CD8-positive, alpha-beta memory T cell (primary cell): ENCODE measurements at regions of chr5 and their contacts with region 1.

Region 1: GRCh38 chr5:39217365-39218281 is 1.7 kb downstream of the FYB1 start:
- DNase-seq: peak; percentile 57 to 86 (median 79)
- H3K4me3 ChIP-seq: peak overlapping the region; percentile 62
- H3K4me3 Mint-ChIP-seq: peak overlapping the region; percentile 75 to 89 (median 81)
- H3K27ac ChIP-seq: peak overlapping the region; percentile 58
- H3K27ac Mint-ChIP-seq: peak overlapping the region; percentile 82 to 99 (median 94)
- H3K4me1 ChIP-seq: peaks cover 71% of the 10 kb centered on the region
- H3K4me1 Mint-ChIP-seq: peaks cover 76 to 81% (median 77%) of the 10 kb centered on the region in 3 donors
- H3K27me3 ChIP-seq: no peaks in the 10 kb centered on the region
- H3K27me3 Mint-ChIP-seq: no peaks in the 10 kb centered on the region

Region 2: DNA sequence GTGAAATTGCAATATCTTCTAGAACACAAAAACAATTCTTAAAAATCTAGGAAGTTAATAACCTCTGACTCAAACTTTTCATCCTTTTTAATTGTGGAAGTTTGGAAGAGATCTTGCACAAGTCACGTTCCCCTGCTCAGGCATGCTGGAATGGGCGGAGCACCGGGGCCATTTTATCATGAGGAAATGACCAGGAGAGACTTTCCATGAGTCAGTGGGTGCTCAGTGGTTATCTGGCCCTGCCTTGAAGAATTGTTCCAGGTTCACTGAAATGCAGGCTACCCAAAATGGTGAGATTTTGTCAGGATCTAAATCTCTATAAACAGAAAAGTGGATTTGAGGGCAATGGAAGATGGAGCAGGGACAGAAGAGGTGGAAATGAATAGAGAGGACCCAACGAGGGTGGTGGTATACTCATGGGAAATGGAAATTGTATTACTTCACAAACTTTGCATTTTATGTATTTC is 59.5 kb before region 1 on chr5:
- CTCF ChIA-PET with region 1: interaction called, 37 read pairs
- POLR2A ChIA-PET with region 1: no interaction called
- DNase-seq: peak in 1 of 5 donors; percentile 25
- H3K4me3 ChIP-seq: no peak overlapping the region
- H3K4me3 Mint-ChIP-seq: peak overlapping the region in 6 of 7 donors; percentile 1 to 59 (median 38)
- H3K27ac ChIP-seq: peak overlapping the region; percentile 13
- H3K27ac Mint-ChIP-seq: peak overlapping the region; percentile 44 to 86 (median 75)
- H3K4me1 ChIP-seq: peaks cover 90% of the 10 kb centered on the region
- H3K4me1 Mint-ChIP-seq: peaks cover 80 to 95% (median 93%) of the 10 kb centered on the region in 3 donors
- H3K27me3 ChIP-seq: no peaks in the 10 kb centered on the region
- H3K27me3 Mint-ChIP-seq: no peaks in the 10 kb centered on the region

Region 3: DNA sequence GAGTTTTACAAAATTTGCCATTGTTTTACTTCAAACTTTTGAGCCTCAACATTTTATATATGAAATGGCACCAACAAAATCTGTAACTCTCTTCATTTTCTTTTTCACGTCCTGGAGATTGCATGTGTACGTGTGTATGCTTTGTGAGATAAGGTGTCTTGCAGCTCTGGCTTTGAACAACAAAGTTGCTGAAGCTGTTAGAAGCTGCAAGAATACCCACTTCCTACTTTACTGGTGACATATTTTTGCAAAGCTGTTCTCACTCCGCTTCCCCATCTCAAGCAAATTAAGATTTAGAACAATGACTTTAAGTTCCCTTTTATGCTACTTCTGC is 40.0 kb before region 1 on chr5:
- CTCF ChIA-PET with region 1: interaction called, 79 read pairs
- POLR2A ChIA-PET with region 1: interaction called, 19 read pairs
- DNase-seq: peak in 3 of 5 donors; percentile 57 to 78 (median 70)
- H3K4me3 ChIP-seq: peak overlapping the region; percentile 61
- H3K4me3 Mint-ChIP-seq: peak overlapping the region; percentile 60 to 84 (median 74)
- H3K27ac ChIP-seq: peak overlapping the region; percentile 68
- H3K27ac Mint-ChIP-seq: peak overlapping the region; percentile 77 to 97 (median 93)
- H3K4me1 ChIP-seq: peaks cover 96% of the 10 kb centered on the region
- H3K4me1 Mint-ChIP-seq: peaks cover 96 to 100% (median 99%) of the 10 kb centered on the region in 3 donors
- H3K27me3 ChIP-seq: no peaks in the 10 kb centered on the region
- H3K27me3 Mint-ChIP-seq: no peaks in the 10 kb centered on the region

Region 4: DNA sequence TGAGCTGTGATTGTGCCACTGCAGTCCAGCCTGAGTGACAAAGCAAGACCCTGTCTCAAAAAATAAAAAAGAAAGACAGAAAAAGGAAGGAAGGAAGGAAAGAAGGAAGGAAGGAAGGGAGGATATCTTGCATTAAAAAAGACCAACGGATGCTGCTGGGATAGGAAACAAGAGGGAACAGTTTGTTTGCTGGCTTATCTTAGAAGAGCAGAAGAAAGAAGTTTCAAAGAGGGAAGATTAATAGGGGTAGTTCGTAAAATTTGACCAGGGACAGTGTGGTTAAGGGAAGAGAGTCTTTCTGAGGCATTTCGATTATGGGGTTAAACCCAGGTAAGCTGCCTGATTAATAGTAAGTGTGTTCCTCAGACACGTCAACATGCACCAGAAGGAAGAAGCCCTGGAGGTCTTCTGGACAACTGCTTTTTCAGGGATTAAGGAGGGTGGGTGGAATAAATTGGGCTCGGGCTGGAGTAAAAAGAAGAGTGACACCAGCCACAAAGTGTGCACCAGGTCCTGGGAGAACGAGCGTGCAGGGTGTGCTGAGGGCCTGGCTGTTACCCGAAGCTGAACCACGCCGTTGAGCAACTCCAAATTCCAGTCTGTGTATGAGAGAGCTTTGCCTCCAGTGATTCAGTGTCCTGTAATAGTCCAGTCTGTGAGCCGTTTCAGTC is 23.0 kb before region 1 on chr5:
- CTCF ChIA-PET with region 1: interaction called, 156 read pairs
- POLR2A ChIA-PET with region 1: interaction called, 24 read pairs
- DNase-seq: no peak
- H3K4me3 ChIP-seq: peak overlapping the region; percentile 45
- H3K4me3 Mint-ChIP-seq: peak overlapping the region; percentile 42 to 96 (median 79)
- H3K27ac ChIP-seq: peak overlapping the region; percentile 40
- H3K27ac Mint-ChIP-seq: peak overlapping the region; percentile 67 to 97 (median 90)
- H3K4me1 ChIP-seq: peaks cover 67% of the 10 kb centered on the region
- H3K4me1 Mint-ChIP-seq: peaks cover 75 to 81% (median 78%) of the 10 kb centered on the region in 3 donors
- H3K27me3 ChIP-seq: no peaks in the 10 kb centered on the region
- H3K27me3 Mint-ChIP-seq: no peaks in the 10 kb centered on the region

Region 5: DNA sequence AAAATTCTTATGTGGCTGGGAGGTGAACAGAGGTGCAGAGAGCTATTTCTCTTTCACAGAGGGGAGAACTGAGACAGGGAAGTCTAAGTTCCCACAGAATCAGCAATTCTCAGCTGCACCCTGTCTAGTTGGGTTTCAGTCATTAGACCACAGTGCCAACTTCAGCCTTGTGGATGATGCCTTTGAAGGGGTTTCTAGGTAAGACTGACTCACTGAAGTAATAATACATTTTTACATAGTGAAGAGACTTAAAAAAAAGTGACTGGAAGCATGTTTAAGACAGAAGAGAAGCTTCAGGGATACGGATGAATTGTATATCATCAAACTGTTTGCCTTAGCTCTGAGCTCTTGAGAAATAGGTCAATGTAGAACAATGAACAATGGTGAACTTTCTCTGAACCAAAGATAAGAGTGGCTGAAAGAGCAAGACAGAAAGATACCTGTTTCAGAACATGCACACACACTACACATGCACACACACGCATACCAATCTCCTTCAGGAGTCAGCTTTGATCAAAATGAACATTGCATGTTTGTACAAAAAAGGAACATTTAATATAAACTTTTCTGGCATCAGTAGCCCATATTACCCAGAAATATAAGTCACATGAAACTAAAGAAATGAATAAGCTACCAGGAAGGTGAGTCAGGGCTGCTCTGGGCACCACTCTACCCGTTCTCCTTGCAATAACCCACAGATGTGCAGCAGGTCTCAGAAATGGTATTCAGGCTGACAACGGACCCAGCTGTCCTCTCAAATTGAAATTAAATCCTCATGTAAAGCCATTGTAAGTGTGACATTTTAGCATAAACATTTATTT is 14.3 kb after region 1 on chr5:
- CTCF ChIA-PET with region 1: interaction called, 17 read pairs
- POLR2A ChIA-PET with region 1: no interaction called
- DNase-seq: no peak
- H3K4me3 ChIP-seq: no peak overlapping the region
- H3K4me3 Mint-ChIP-seq: peak overlapping the region in 4 of 7 donors; percentile 2 to 44 (median 22)
- H3K27ac ChIP-seq: no peak overlapping the region
- H3K27ac Mint-ChIP-seq: peak overlapping the region in 7 of 8 donors; percentile 6 to 78 (median 40)
- H3K4me1 ChIP-seq: peaks cover 9% of the 10 kb centered on the region
- H3K4me1 Mint-ChIP-seq: peaks cover 14 to 27% (median 15%) of the 10 kb centered on the region in 3 donors
- H3K27me3 ChIP-seq: no peaks in the 10 kb centered on the region
- H3K27me3 Mint-ChIP-seq: no peaks in the 10 kb centered on the region

Region 6: DNA sequence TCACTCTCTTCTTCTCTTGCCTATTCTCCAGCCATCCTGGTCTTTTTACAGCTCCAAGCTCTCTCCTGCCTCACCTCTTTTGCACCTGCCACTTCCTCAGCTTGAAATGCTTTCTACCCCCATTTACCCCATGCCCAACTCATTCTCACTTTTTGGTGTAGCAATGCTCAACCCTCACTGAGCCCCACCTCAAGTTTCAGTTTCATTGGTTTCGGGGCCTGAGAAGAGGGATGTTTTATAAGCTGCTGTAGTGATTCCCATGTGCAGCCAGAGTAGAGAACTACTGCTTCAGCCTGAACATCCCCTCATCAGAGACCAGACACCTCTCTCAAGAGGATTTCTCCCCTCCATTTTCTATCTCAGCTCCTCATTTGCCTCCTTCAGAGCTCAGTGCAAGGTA is 46.9 kb after region 1 on chr5:
- CTCF ChIA-PET with region 1: interaction called, 23 read pairs
- POLR2A ChIA-PET with region 1: no interaction called
- DNase-seq: no peak
- H3K4me3 ChIP-seq: no peak overlapping the region
- H3K4me3 Mint-ChIP-seq: peak overlapping the region; percentile 24 to 92 (median 64)
- H3K27ac ChIP-seq: no peak overlapping the region
- H3K27ac Mint-ChIP-seq: peak overlapping the region; percentile 26 to 98 (median 78)
- H3K4me1 ChIP-seq: peaks cover 10% of the 10 kb centered on the region
- H3K4me1 Mint-ChIP-seq: peaks cover 58 to 73% (median 64%) of the 10 kb centered on the region in 3 donors
- H3K27me3 ChIP-seq: no peaks in the 10 kb centered on the region
- H3K27me3 Mint-ChIP-seq: peaks cover 0 to 2% of the 10 kb centered on the region in 2 donors

Region 7: GRCh38 chr5:39283231-39283818 is 65.7 kb after region 1 on chr5:
- CTCF ChIA-PET with region 1: interaction called, 110 read pairs
- POLR2A ChIA-PET with region 1: interaction called, 9 read pairs
- DNase-seq: peak; percentile 32 to 76 (median 70)
- H3K4me3 ChIP-seq: no peak overlapping the region
- H3K4me3 Mint-ChIP-seq: peak overlapping the region in 2 of 7 donors; percentile 4 to 32
- H3K27ac ChIP-seq: no peak overlapping the region
- H3K27ac Mint-ChIP-seq: peak overlapping the region in 6 of 8 donors; percentile 16 to 81 (median 54)
- H3K4me1 ChIP-seq: peaks cover 6% of the 10 kb centered on the region
- H3K4me1 Mint-ChIP-seq: peaks cover 5 to 23% (median 17%) of the 10 kb centered on the region in 3 donors
- H3K27me3 ChIP-seq: no peaks in the 10 kb centered on the region
- H3K27me3 Mint-ChIP-seq: peaks cover 0 to 5% of the 10 kb centered on the region in 2 donors